HCT116 (cell line): ENCODE measurements at regions of chr11 and their contacts with region 1.

Region 1: DNA sequence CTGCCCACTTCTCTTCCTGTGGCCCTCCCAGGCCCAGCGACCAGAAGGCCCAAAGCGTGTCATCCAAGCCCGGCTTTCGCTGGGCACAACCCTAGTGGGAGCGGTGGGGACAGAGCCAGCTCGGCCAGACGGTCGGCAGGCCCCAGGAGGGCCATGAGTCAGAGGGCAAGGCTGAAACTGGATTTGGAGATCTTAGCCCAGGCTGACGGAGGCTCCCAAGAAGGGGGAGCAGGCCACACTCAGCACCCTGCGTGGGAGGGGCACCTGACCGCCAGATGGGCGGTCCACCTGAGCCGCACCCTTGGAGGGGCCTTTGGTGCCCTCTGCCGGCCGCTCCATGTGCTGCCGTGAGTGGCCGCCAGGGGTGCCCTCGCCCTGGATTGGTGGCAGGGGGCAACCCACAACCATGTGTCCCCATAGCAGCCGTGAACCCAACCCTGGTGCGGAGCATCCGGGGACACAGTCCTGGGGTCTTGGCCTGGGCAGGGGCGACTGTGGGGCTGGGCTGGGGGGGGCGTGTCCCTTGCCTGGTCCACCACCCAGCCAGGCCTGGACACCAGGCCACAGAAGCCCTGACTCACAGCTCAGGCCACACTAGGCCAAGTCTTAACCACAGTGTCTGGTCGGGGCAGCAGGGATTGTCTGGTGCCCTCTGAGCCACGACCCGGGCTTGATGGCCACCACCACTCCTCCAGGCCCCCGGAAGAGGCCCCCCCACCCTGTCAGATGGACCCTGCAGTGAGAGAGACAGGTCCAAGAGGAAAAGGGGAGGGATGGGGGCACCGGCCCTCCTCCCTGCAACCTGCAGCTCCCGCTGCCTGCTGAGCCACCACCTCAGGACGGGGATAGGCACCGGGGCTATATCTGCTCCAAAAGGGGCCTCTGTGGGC is 19.2 kb upstream of the TALDO1 start:
- DNase-seq: peak; percentile 91
- ATAC-seq: peak; percentile 91
- H3K4me3 ChIP-seq: 0 out of 4 replicates have a peak overlapping the region, but pooled peaks of 1 of the 2 experiments have one; percentile 14
- H3K27ac ChIP-seq: peak overlapping the region; percentile 70
- H3K4me1 ChIP-seq: peaks cover 7 to 24% of the 10 kb centered on the region in 2 experiments; a peak in 3 of 4 replicates
- H3K27me3 ChIP-seq: no peaks in the 10 kb centered on the region
- CTCF ChIP-seq: peak; percentile 98 to 100 (median 99)
- POLR2A ChIP-seq: no peak
- RAD21 ChIP-seq: peak; percentile 94

Region 2: GRCh38 chr11:554824-555472 is 173.2 kb before region 1 on chr11:
- CTCF ChIA-PET with region 1: no interaction called
- POLR2A ChIA-PET with region 1: no interaction called
- RAD21 ChIA-PET with region 1: interaction called, 3 read pairs
- intact Hi-C with region 1: loop called (anchors 2 kb)
- DNase-seq: peak; percentile 44
- ATAC-seq: peak; percentile 78
- H3K4me3 ChIP-seq: peak overlapping the region; percentile 28 to 47
- H3K27ac ChIP-seq: peak overlapping the region; percentile 65; the same call in 1 of the 2 replicates
- H3K4me1 ChIP-seq: peaks cover 18 to 25% of the 10 kb centered on the region in 2 experiments
- H3K27me3 ChIP-seq: no peaks in the 10 kb centered on the region
- CTCF ChIP-seq: peak in 2 of 3 experiments; percentile 47 to 59; a peak in 4 of 6 replicates
- POLR2A ChIP-seq: no peak
- RAD21 ChIP-seq: no peak

Region 3: DNA sequence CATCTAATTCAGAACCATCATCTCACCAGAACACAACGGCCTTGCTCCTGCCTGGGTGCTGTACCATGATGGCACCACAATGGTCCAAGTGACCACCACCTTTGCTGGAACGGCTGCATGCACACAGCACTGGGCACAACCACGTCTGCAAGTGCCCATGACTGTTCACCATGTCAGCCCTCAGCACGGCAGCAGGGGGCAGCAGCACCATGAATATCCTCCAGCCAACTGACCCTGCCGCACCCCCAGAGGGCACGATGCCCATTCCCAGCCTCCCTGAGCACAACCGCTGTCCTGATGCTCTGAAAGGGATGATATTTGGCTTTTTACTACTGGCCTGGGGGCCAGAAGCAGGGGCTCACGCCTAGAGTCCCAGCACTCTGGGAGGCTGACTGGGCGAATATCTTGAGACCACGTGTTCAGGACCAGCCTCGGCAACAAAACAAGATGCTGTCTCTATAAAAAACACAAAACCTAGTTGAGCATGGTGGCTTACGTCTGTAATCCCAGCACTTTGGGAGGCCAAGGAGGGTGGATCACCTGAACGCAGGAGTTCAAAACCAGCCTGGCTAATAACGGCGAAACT is 65.3 kb before region 1 on chr11:
- CTCF ChIA-PET with region 1: no interaction called
- POLR2A ChIA-PET with region 1: no interaction called
- RAD21 ChIA-PET with region 1: no interaction called
- intact Hi-C with region 1: loop called (anchors 1 kb)
- DNase-seq: peak; percentile 48
- ATAC-seq: peak; percentile 98
- H3K4me3 ChIP-seq: no peak overlapping the region
- H3K27ac ChIP-seq: no peak overlapping the region
- H3K4me1 ChIP-seq: no peaks in the 10 kb centered on the region
- H3K27me3 ChIP-seq: no peaks in the 10 kb centered on the region
- CTCF ChIP-seq: peak; percentile 85 to 90 (median 88)
- POLR2A ChIP-seq: no peak
- RAD21 ChIP-seq: peak; percentile 89

Region 4: GRCh38 chr11:695538-696248 is 32.4 kb before region 1 on chr11 and contains the start of gene TMEM80:
- CTCF ChIA-PET with region 1: interaction called, 10 read pairs
- POLR2A ChIA-PET with region 1: no interaction called
- RAD21 ChIA-PET with region 1: interaction called in 1 of 2 experiments, 3 read pairs
- intact Hi-C with region 1: loop called (anchors 1 kb)
- DNase-seq: peak; percentile 96
- ATAC-seq: peak; percentile 86
- H3K4me3 ChIP-seq: peak within 1 kb of the TSS; percentile 75 to 94
- H3K27ac ChIP-seq: peak within 1 kb of the TSS; percentile 99
- H3K4me1 ChIP-seq: peaks cover 8 to 34% of the 10 kb centered on the region in 2 experiments
- H3K27me3 ChIP-seq: no peaks in the 10 kb centered on the region
- CTCF ChIP-seq: no peak
- POLR2A ChIP-seq: peak; percentile 45
- RAD21 ChIP-seq: no peak
- total RNA-seq, gene TMEM80: 18.4 TPM

Region 5: GRCh38 chr11:765025-765801 is 37.1 kb after region 1 on chr11:
- CTCF ChIA-PET with region 1: interaction called, 10 read pairs
- POLR2A ChIA-PET with region 1: interaction called, 3 read pairs
- RAD21 ChIA-PET with region 1: no interaction called
- intact Hi-C with region 1: loop called (anchors 2 kb)
- DNase-seq: peak; percentile 47
- ATAC-seq: peak; percentile 43
- H3K4me3 ChIP-seq: no peak overlapping the region
- H3K27ac ChIP-seq: peak overlapping the region; percentile 45
- H3K4me1 ChIP-seq: peaks cover 20 to 48% of the 10 kb centered on the region in 2 experiments
- H3K27me3 ChIP-seq: no peaks in the 10 kb centered on the region
- CTCF ChIP-seq: peak; percentile 73 to 84 (median 73); a peak in 5 of 6 replicates
- POLR2A ChIP-seq: no peak
- RAD21 ChIP-seq: peak; percentile 83